ENCODE measurements at regions of chrX and their contacts with region 1.

Region 1: DNA sequence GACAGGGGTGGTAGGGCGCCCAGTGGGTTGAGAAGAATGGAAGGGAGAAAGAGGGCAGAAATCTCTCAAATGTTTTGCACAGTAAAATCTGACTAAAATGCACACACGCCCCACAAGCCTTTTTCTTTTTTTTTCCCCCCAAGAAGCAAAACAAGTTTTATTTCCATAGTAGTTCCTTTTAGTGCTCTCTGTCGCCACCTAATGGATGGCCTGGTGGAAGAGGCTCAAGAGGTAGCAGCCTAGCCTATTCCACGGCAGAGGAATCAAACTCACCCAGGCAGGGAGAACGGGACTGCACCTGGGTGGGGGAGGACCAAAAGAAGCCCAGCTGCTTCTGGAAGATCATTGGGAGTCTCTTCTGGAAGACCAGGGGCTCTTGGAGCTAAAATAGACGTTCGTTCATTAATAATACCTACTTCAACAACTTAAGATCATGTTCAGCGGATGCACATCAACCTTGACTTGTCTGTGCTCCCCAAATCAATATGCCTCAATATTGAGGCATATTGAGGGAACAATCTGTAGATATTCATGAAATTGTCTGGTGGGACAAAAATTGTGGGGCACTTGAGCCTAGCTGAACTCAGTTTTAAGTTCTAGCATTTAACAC is 31.6 kb upstream of the IRAK1 start:
- DNase-seq: peak; percentile 41 to 69
- ATAC-seq: peak in 5 of 8 donors; percentile 51 to 70 (median 67)
- H3K4me3 ChIP-seq: no peak overlapping the region
- H3K27ac ChIP-seq: no peak overlapping the region
- H3K4me1 ChIP-seq: peaks cover 7 to 57% (median 44%) of the 10 kb centered on the region in 9 donors
- H3K27me3 ChIP-seq: peaks cover 0 to 70% (median 0%) of the 10 kb centered on the region in 7 donors
- CTCF ChIP-seq: peak; percentile 42 to 79 (median 65)

Region 2: DNA sequence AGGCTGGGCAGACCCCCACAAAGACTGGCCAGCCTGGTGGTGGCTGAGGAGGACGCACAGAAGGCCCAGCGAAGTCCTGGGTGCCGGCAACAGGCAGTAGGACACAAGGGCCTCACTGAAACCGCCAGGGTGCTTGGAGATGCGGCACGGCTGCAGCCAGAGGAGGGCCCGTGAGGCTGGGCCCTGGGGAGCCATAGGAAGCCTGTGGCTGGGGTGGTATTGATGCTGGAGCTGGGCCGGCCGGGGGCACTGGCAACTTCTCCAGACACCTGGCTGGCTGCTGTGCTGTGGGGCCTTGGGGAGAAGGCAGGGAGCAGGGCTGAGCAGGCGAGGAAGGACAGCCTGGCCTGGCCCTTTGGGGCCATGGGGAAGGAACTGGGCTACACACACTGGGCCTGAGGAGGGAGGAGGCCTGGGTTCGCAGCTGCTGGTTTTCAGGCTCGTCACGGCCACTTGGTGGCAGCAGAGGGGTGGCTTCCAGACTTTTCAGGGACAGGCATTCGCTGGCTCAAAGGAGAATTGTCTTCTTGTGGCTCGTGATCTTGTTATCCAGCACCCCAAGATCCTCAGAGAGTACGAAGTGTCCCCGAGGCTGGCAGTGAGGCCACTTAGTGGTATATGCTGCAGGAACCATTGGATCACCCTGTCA is 496.7 kb before region 1 on chrX:
- intact Hi-C with region 1: no loop called
- DNase-seq: peak; percentile 48 to 69
- ATAC-seq: peak; percentile 42 to 81 (median 68)
- H3K4me3 ChIP-seq: no peak overlapping the region
- H3K27ac ChIP-seq: no peak overlapping the region
- H3K4me1 ChIP-seq: no peaks in the 10 kb centered on the region
- H3K27me3 ChIP-seq: no peaks in the 10 kb centered on the region
- CTCF ChIP-seq: peak; percentile 29 to 70 (median 64)

Region 3: GRCh38 chrX:153763989-153764755 is 287.1 kb before region 1 on chrX and contains the start of gene PLXNB3:
- intact Hi-C with region 1: no loop called
- DNase-seq: peak; percentile 62 to 77
- ATAC-seq: peak; percentile 74 to 93 (median 83)
- H3K4me3 ChIP-seq: peak within 1 kb of the TSS in 3 of 10 donors; percentile 23 to 33 (median 24)
- H3K27ac ChIP-seq: peak within 1 kb of the TSS in 7 of 10 donors; percentile 10 to 52 (median 39)
- H3K4me1 ChIP-seq: peaks cover 3 to 23% (median 15%) of the 10 kb centered on the region in 9 donors
- H3K27me3 ChIP-seq: peaks cover 0 to 11% (median 0%) of the 10 kb centered on the region in 7 donors
- CTCF ChIP-seq: peak; percentile 48 to 87 (median 75)
- total RNA-seq, gene PLXNB3: 2.1 to 5.8 (median 4.3) TPM

Region 4: GRCh38 chrX:154013614-154014360 is 37.5 kb before region 1 on chrX:
- intact Hi-C with region 1: loop called in 3 of 10 experiments (anchors 5 kb)
- DNase-seq: peak in 1 of 2 donors; percentile 40
- ATAC-seq: peak; percentile 36 to 81 (median 69)
- H3K4me3 ChIP-seq: no peak overlapping the region
- H3K27ac ChIP-seq: no peak overlapping the region
- H3K4me1 ChIP-seq: peaks cover 0 to 9% (median 3%) of the 10 kb centered on the region in 9 donors
- H3K27me3 ChIP-seq: peaks cover 0 to 68% (median 0%) of the 10 kb centered on the region in 7 donors
- CTCF ChIP-seq: peak; percentile 57 to 94 (median 83)

Region 5: GRCh38 chrX:154091678-154092077 is 40.4 kb after region 1 on chrX:
- intact Hi-C with region 1: loop called in 1 of 10 experiments (anchors 5 kb)
- DNase-seq: no peak
- ATAC-seq: peak in 6 of 8 donors; percentile 27 to 58 (median 48)
- H3K4me3 ChIP-seq: no peak overlapping the region
- H3K27ac ChIP-seq: peak overlapping the region in 5 of 10 donors; percentile 13 to 60 (median 16)
- H3K4me1 ChIP-seq: peaks cover 2 to 70% (median 39%) of the 10 kb centered on the region in 9 donors
- H3K27me3 ChIP-seq: peaks cover 0 to 76% (median 0%) of the 10 kb centered on the region in 7 donors
- CTCF ChIP-seq: no peak

Measured in heart right ventricle (tissue), 16 donors.